ENCODE measurements at regions of chr19 and their contacts with region 1.

Region 1: DNA sequence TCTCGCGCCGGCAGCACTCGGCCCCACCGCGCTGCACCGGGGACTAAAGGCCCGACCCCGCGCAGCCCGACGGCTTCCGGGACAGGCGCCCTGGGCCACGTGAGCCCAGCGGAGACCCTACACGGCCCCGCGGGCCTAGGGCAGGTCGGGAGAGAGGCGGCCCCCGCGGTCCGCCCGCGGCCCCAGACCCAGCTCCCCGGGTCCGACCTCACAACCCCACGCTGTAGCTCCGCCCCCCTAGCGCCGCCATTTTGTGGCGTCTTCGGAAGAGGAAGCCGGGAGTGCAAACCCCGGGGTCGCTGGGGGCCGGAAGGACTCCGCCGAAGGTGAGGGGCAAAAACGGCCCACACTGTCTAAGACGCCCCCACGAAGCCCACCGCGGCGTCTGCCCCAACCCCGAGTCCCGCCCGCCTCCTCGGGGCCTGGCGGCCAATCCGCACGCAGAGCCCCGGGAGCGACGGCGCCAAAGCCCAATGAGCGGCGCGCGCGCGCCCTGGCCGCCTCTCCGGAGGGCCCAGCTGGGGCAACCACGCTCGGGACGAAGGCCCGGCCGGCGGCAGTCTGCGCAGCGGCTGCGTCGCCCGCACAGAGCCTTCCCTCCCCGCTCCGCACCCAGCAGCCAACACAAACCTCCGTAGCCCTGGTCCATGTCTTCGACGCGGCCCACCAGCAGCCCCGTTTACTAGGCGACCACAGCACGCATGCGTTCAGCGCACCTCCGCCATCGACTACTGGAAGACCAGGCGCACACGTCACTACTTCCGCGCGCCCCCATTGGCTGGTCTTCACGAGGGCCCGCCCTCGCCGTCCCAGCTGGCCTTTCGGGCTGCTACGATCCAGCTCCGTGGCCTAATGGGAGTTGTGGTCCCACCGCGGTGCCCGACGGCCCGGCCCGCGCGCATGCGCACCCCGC is at the start of gene AKAP8:
- DNase-seq: peak; percentile 99
- ATAC-seq: peak; percentile 87
- H3K4me3 ChIP-seq: peak within 1 kb of the TSS; percentile 88
- H3K27ac ChIP-seq: peak within 1 kb of the TSS; percentile 85
- H3K4me1 ChIP-seq: peaks cover 21% of the 10 kb centered on the region
- H3K27me3 ChIP-seq: no peaks in the 10 kb centered on the region
- CTCF ChIP-seq: no peak
- total RNA-seq, gene AKAP8: 36.3 and 48.0 TPM in 2 replicates

Region 2: DNA sequence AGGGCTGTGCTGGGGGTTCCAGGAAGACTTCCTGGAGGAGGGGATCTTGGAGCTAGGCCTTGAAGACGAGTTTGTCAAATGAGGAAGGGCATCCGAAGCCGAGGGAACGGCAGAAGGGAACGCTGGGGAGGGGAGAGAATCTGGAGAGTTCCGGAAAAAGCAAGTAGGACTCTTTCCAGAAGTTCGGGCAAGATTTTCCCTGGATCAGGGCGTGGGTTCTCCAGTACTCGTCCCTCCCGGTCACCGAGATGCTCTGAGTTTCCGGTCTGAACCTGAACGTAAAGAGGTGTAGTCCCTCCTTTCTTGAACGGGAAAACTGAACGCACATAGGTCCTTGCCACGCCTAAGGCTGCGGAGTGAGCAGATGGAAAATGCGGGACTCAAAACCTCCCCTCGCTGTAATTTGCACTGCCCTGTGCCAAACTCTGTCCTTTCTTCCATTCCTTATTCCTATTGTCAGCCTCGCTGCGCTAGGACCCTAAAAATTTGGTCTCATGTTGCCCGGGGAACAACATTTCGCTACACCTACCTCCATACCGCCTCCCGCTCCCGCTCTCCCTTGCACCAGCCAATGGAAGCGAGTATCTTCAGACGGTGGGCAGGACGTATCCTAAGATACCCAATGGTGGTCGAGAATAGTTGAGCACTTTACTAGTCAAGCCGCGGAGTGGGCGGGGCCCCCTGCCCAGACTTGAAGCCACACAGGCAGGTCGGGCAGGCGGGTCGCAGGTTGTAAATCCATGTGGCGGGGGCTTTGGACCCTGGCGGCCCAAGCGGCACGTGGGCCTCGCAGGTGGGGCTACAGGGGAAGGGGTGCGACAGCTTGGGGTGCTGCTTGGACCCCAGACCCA is 1957.8 kb after region 1 on chr19 and contains the start of gene GTPBP3:
- CTCF ChIA-PET with region 1: no interaction called
- POLR2A ChIA-PET with region 1: interaction called, 24 read pairs
- intact Hi-C with region 1: no loop called
- DNase-seq: peak; percentile 99
- ATAC-seq: peak; percentile 73
- H3K4me3 ChIP-seq: peak within 1 kb of the TSS; percentile 86
- H3K27ac ChIP-seq: peak within 1 kb of the TSS; percentile 70
- H3K4me1 ChIP-seq: peaks cover 18% of the 10 kb centered on the region
- H3K27me3 ChIP-seq: no peaks in the 10 kb centered on the region
- CTCF ChIP-seq: no peak
- total RNA-seq, gene GTPBP3: 86.0 and 109 TPM in 2 replicates

Measured in PC-3 (cell line).